Activated T-helper 2 cell treated with anti-CD3 and anti-CD28 coated beads, Interferon-gamma antibody, Interleukin-2, Interleukin-4, amounts not matched to agents 10 μg/mL and 5 μg/mL and 100 μg/mL, durations not matched to agents 14 hours and 24 hours and 36 hours (primary cell): ENCODE measurements at regions of chr15 and their contacts with region 1.

Region 1: GRCh38 chr15:40440743-40441564 is at the start of gene BAHD1:
- DNase-seq: peak; percentile 94
- H3K4me3 Mint-ChIP-seq: peak within 1 kb of the TSS; percentile 91
- H3K27ac Mint-ChIP-seq: peak within 1 kb of the TSS; percentile 77
- H3K4me1 Mint-ChIP-seq: peaks cover 37% of the 10 kb centered on the region
- H3K27me3 Mint-ChIP-seq: peaks cover 52% of the 10 kb centered on the region
- total RNA-seq, gene BAHD1: 26.5 and 26.7 TPM in 2 replicates

Region 2: GRCh38 chr15:39453500-39454073 is 987.4 kb before region 1 on chr15:
- intact Hi-C with region 1: no loop called
- DNase-seq: no peak
- H3K4me3 Mint-ChIP-seq: no peak overlapping the region
- H3K27ac Mint-ChIP-seq: no peak overlapping the region
- H3K4me1 Mint-ChIP-seq: peaks cover 4% of the 10 kb centered on the region
- H3K27me3 Mint-ChIP-seq: peaks cover 24% of the 10 kb centered on the region

Region 3: GRCh38 chr15:40150163-40150925 is 290.6 kb before region 1 on chr15:
- intact Hi-C with region 1: no loop called
- DNase-seq: no peak
- H3K4me3 Mint-ChIP-seq: no peak overlapping the region
- H3K27ac Mint-ChIP-seq: no peak overlapping the region
- H3K4me1 Mint-ChIP-seq: no peaks in the 10 kb centered on the region
- H3K27me3 Mint-ChIP-seq: peaks cover 6% of the 10 kb centered on the region

Region 4: DNA sequence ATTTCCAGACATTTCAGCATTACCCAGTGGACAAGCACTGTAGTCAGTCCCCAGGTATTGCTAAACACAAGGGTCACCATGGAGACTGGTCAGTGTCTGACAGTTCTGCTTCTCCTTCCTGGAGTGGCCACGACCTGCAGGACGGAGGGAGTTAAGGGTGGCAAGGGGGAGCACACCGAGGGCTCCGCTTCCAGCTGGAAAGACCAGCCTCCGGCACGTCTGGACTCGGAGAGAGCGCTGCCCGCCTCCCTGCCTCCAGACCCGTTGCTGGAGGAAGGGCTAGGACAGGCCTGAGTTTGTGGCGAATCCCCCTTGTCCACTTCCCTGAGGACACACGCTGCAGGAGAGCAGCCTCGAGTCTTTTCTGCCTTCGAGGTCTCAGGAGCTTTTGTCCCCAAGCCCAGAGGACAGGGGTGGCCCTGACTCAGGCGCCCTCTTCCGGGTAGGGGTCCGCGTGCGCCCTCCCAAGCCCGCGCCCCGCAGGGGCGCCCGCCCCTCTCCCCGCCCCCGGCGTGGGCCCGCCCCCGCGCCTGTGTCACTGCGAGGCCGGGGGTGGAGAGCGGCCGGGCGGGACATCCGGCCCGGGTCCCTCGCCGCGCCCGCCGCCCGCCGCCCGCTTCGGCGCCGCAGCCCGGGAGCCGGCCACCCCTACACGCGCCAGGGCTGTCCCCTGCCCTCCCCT is 29.6 kb after region 1 on chr15 and contains the start of gene CHST14:
- intact Hi-C with region 1: loop called (anchors 1 kb)
- DNase-seq: peak; percentile 43
- H3K4me3 Mint-ChIP-seq: peak within 1 kb of the TSS; percentile 86
- H3K27ac Mint-ChIP-seq: peak within 1 kb of the TSS; percentile 68
- H3K4me1 Mint-ChIP-seq: peaks cover 27% of the 10 kb centered on the region
- H3K27me3 Mint-ChIP-seq: no peaks in the 10 kb centered on the region
- total RNA-seq, gene CHST14: 11.8 and 12.2 TPM in 2 replicates